Kidney (tissue), 22 donors: ENCODE measurements at regions of chr1 and their contacts with region 1.

Region 1: DNA sequence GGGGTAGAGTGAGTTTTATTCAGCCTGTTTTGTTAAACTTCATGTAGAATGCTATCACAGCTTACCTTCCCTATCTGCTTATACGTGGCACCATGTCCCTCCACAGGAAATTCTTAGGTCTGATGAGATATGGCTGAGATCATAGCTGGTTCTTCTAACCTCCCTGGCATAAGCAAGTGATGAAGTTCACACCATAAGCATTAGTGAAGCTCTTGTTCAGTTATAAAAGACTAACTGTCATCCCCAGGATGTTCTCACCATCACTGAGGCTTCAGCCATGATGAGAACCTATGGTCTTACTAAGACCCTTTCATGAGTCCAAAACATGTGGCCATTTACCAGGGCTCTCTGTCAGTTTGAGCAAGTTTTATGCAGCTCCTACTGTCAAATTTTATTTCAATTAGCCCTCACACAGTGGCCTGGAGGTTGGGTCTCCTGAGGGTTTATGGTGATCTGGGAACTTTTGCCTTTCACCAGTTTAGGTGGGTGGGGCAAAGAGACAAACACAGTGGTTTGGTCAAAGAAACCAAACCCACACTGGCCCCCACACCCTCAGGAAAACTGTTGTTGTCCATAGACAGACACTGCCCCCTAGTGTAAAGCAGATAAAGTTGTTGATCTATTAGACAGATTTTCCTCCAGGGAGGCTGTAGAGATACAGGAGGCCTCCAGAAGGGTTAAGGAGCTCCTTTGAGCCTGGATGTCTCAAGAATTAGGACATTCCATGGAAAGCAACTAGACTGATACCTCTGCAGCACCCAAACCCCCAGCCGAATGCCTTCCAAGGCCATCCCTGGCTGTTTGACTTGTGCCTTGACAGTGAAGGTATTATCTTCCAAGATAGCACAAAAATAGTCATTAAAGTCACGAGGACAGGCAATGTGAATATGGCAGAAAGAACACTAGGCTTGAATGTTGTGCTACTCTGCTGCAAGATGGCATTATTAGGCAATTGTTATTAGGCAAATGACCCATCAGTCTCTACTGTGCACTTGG is 5.0 kb downstream of the SLC22A15 start:
- DNase-seq: peak in 3 of 5 donors; percentile 12 to 51 (median 22)
- H3K4me3 ChIP-seq: no peak overlapping the region
- H3K27ac ChIP-seq: no peak overlapping the region
- H3K4me1 ChIP-seq: peaks cover 0 to 3% (median 0%) of the 10 kb centered on the region in 3 donors
- H3K27me3 ChIP-seq: no peaks in the 10 kb centered on the region
- CTCF ChIP-seq: peak; percentile 63

Region 2: DNA sequence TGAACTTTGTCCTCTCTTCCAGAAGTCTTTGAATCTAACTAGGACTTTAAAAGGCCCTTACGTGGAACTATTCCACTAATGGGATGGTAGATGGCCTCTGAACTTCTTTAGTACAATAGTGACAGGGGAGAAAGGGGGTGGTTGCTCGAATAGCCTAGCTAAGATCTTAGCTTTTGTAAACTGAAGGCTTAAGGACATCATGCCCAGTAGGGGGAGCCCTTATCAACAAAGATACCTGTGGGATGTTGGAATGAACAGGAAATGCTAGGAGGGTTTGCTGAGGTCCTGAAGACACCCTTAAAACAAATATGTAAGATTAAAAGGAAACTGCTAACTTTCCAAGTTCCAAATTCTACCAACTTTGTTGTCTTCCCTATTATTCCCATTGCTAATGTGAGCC is 173.6 kb before region 1 on chr1:
- intact Hi-C with region 1: loop called (anchors 10 kb)
- DNase-seq: peak in 4 of 5 donors; percentile 48 to 84 (median 72)
- H3K4me3 ChIP-seq: no peak overlapping the region
- H3K27ac ChIP-seq: no peak overlapping the region
- H3K4me1 ChIP-seq: no peaks in the 10 kb centered on the region
- H3K27me3 ChIP-seq: no peaks in the 10 kb centered on the region
- CTCF ChIP-seq: peak; percentile 62

Region 3: DNA sequence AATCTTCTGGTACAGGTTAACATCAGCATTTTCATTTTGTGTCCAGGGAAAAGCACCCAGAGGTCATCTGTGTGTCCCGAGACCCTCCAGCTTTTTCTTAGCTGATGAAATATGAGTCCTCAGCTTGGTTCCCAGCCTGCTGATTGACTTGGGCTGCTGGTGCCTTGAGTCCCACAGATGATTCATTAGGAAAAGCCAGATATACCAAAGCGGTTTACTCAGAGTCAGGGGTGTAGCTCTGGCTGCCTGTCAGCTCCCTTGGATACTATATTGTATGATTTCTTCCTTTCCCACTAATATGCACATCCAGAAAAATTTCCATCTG is 86.2 kb after region 1 on chr1:
- intact Hi-C with region 1: no loop called
- DNase-seq: no peak
- H3K4me3 ChIP-seq: no peak overlapping the region
- H3K27ac ChIP-seq: no peak overlapping the region
- H3K4me1 ChIP-seq: no peaks in the 10 kb centered on the region
- H3K27me3 ChIP-seq: no peaks in the 10 kb centered on the region
- CTCF ChIP-seq: no peak

Region 4: GRCh38 chr1:116334015-116334547 is 352.8 kb after region 1 on chr1:
- intact Hi-C with region 1: no loop called
- DNase-seq: peak; percentile 26 to 76 (median 58)
- H3K4me3 ChIP-seq: no peak overlapping the region
- H3K27ac ChIP-seq: peak overlapping the region; percentile 47 to 65
- H3K4me1 ChIP-seq: peaks cover 3 to 46% (median 21%) of the 10 kb centered on the region in 3 donors
- H3K27me3 ChIP-seq: no peaks in the 10 kb centered on the region
- CTCF ChIP-seq: no peak